Activated naive CD4-positive, alpha-beta T cell treated with anti-CD3 and anti-CD28 coated beads for 36 hours (primary cell): ENCODE measurements at regions of chr9 and their contacts with region 1.

Region 1: DNA sequence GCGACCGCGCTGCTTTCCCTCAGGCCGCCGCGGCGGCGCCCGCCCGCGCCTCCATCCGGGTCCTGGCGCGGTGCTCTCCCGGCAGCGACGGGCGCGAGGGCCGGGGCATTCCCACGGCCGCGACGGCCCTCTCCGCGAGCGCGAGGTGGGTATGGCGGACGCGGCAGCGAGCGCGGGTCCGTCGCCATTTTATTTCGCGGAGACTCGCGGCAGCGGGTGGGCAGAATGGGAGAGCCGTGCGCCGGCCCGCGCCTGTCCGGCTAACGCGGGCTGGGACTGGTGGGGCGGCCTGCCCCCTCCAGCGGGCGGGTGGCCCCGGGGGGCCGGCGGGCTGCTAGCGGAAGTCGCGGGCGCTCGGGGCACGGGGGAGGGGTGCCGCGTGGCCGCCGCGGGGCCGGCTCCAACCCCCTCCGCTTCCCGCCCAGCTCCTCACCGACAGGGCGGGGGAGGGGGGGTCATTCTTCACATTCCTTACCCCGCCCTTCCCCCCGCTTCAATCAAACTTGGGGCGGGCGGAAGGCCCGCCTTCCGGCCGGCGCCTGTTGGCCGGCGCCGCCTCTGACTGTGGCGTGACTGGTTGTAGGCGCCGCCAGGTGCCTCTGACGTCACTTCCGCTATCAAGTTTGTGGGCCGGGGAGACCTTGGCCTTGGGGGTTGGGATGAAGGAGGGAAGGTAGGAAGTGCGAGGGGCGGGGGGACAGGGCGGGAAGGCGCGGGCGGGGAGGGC is 82.1 kb downstream of the PTPDC1 start:
- DNase-seq: peak; percentile 97
- H3K4me3 Mint-ChIP-seq: peak overlapping the region; percentile 86
- H3K27ac Mint-ChIP-seq: peak overlapping the region; percentile 87
- H3K4me1 Mint-ChIP-seq: peaks cover 41% of the 10 kb centered on the region
- H3K27me3 Mint-ChIP-seq: no peaks in the 10 kb centered on the region

Region 2: GRCh38 chr9:92669890-92670708 is 1496.3 kb before region 1 on chr9 and contains the start of gene IPPK:
- CTCF ChIA-PET with region 1: no interaction called
- intact Hi-C with region 1: loop called (anchors 10 kb)
- DNase-seq: peak; percentile 98
- H3K4me3 Mint-ChIP-seq: peak within 1 kb of the TSS; percentile 93
- H3K27ac Mint-ChIP-seq: peak within 1 kb of the TSS; percentile 90
- H3K4me1 Mint-ChIP-seq: peaks cover 26% of the 10 kb centered on the region
- H3K27me3 Mint-ChIP-seq: no peaks in the 10 kb centered on the region
- total RNA-seq, gene IPPK: 7.6 to 8.2 TPM

Region 3: GRCh38 chr9:93566408-93567270 is 599.8 kb before region 1 on chr9:
- CTCF ChIA-PET with region 1: no interaction called
- intact Hi-C with region 1: loop called (anchors 5 kb)
- DNase-seq: peak; percentile 99
- H3K4me3 Mint-ChIP-seq: peak overlapping the region; percentile 90
- H3K27ac Mint-ChIP-seq: peak overlapping the region; percentile 92
- H3K4me1 Mint-ChIP-seq: peaks cover 26% of the 10 kb centered on the region
- H3K27me3 Mint-ChIP-seq: no peaks in the 10 kb centered on the region

Region 4: GRCh38 chr9:94213511-94214124 is 47.2 kb after region 1 on chr9:
- CTCF ChIA-PET with region 1: interaction called, 3 read pairs
- intact Hi-C with region 1: loop called (anchors 5 kb)
- DNase-seq: peak; percentile 83
- H3K4me3 Mint-ChIP-seq: no peak overlapping the region
- H3K27ac Mint-ChIP-seq: no peak overlapping the region
- H3K4me1 Mint-ChIP-seq: peaks cover 3% of the 10 kb centered on the region
- H3K27me3 Mint-ChIP-seq: peaks cover 27% of the 10 kb centered on the region

Region 5: DNA sequence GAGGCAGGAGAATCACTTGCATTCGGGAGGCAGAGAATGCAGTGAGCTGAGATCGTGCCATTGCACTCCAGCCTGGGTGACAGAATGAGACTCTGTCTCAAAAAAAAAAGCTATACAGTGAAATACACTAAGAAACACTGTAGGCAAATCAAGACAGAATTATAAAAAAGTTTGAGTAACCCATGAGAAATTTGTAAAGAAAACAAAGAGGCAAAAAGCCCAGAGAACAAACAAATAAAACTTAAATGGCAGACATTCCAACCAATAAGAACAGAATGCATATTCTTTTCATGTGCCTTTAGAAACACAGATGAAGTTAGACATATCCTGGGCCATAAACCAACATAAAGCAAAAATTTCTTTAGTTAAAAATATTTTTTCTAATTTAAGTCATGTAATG is 123.3 kb after region 1 on chr9:
- CTCF ChIA-PET with region 1: no interaction called
- intact Hi-C with region 1: no loop called
- DNase-seq: no peak
- H3K4me3 Mint-ChIP-seq: no peak overlapping the region
- H3K27ac Mint-ChIP-seq: no peak overlapping the region
- H3K4me1 Mint-ChIP-seq: no peaks in the 10 kb centered on the region
- H3K27me3 Mint-ChIP-seq: no peaks in the 10 kb centered on the region

Region 6: GRCh38 chr9:95317119-95317892 is 1150.9 kb after region 1 on chr9 and contains the start of gene FANCC:
- CTCF ChIA-PET with region 1: no interaction called
- intact Hi-C with region 1: loop called (anchors 5 kb)
- DNase-seq: peak; percentile 85
- H3K4me3 Mint-ChIP-seq: peak within 1 kb of the TSS; percentile 91
- H3K27ac Mint-ChIP-seq: peak within 1 kb of the TSS; percentile 93
- H3K4me1 Mint-ChIP-seq: peaks cover 18% of the 10 kb centered on the region
- H3K27me3 Mint-ChIP-seq: peaks cover 6% of the 10 kb centered on the region
- total RNA-seq, gene FANCC: 14.1 to 14.5 TPM